B cell (primary cell): ENCODE measurements at regions of chr4 and their contacts with region 1.

Region 1: GRCh38 chr4:1899149-1900086 is 28.2 kb downstream of the NSD2 start:
- DNase-seq: peak; percentile 87
- ATAC-seq: peak; percentile 98
- H3K4me3 ChIP-seq: no peak overlapping the region
- H3K4me3 Mint-ChIP-seq: no peak overlapping the region
- H3K27ac ChIP-seq: no peak overlapping the region
- H3K27ac Mint-ChIP-seq: no peak overlapping the region
- H3K4me1 ChIP-seq: peaks cover 5 to 9% of the 10 kb centered on the region in 2 donors
- H3K4me1 Mint-ChIP-seq: peaks cover 9% of the 10 kb centered on the region
- H3K27me3 ChIP-seq: no peaks in the 10 kb centered on the region
- H3K27me3 Mint-ChIP-seq: no peaks in the 10 kb centered on the region
- CTCF ChIP-seq: peak; percentile 92

Region 2: DNA sequence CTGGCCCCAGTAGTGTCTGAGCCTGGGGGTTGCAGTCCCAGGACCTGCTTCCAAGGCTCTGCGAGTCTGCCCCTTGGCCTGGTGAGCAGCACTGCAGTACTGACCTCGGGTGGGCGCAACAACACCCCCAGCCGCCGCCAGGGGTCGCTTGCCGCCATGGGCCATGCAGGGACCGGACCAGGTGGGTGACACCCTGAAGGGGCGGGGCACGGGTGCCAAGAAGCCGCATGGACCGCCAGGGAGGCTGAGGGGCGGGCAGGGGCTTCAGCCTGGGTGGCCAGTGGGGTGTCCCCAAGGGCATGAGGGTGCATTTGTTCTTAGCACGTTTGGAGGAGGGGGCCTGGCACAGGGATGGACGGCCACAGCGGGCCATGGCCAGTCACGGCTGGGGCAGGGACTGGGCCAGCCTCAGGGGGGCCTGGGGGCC is 153.1 kb before region 1 on chr4:
- CTCF ChIA-PET with region 1: interaction called, 120 read pairs
- POLR2A ChIA-PET with region 1: no interaction called
- intact Hi-C with region 1: loop called (anchors 1 kb)
- DNase-seq: peak; percentile 85
- ATAC-seq: peak; percentile 87
- H3K4me3 ChIP-seq: no peak overlapping the region
- H3K4me3 Mint-ChIP-seq: no peak overlapping the region
- H3K27ac ChIP-seq: no peak overlapping the region
- H3K27ac Mint-ChIP-seq: no peak overlapping the region
- H3K4me1 ChIP-seq: peaks cover 3 to 10% of the 10 kb centered on the region in 2 donors
- H3K4me1 Mint-ChIP-seq: peaks cover 2% of the 10 kb centered on the region
- H3K27me3 ChIP-seq: peaks cover 0 to 7% (median 0%) of the 10 kb centered on the region in 4 experiments
- H3K27me3 Mint-ChIP-seq: no peaks in the 10 kb centered on the region
- CTCF ChIP-seq: peak; percentile 89

Region 3: DNA sequence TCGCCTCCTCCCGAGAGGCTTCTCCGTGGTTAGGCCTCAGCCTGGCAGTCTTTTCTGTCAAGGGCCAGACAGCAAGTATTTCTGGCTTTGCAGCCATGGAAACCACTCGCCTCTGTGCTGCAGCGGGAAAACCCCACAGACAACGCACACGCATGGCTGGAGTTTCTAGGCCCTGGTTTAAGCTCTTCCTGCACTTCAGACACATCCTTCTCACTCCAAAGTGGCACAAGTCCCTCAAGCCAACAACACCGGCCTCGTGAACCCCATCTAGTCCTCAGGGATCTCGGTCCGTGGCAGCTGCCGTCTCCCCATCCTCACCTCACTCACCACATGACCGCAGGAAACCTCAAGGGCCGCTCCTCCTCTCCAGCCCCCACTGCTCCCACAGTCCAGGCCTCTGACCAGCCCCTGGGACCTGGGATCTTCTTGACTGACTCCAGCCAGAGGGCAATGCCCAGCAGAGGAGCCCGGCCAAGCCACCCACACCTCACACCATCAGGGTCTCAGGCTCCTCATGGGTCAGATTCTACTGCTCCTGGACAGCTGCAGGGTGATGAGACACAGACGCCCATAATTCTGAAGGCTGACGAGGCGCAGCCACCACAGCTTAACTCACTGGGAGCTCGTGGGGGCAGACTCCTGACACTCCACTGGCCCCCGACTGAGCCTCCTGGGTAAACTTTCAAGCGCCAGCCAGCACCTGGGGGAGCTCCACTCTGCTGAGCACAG is 65.2 kb before region 1 on chr4:
- CTCF ChIA-PET with region 1: interaction called, 21 read pairs
- POLR2A ChIA-PET with region 1: no interaction called
- intact Hi-C with region 1: no loop called
- DNase-seq: peak; percentile 76
- ATAC-seq: peak; percentile 84
- H3K4me3 ChIP-seq: no peak overlapping the region
- H3K4me3 Mint-ChIP-seq: peak overlapping the region; percentile 61
- H3K27ac ChIP-seq: peak overlapping the region; percentile 41 to 76
- H3K27ac Mint-ChIP-seq: peak overlapping the region; percentile 78
- H3K4me1 ChIP-seq: peaks cover 16 to 26% of the 10 kb centered on the region in 2 donors
- H3K4me1 Mint-ChIP-seq: peaks cover 29% of the 10 kb centered on the region
- H3K27me3 ChIP-seq: no peaks in the 10 kb centered on the region
- H3K27me3 Mint-ChIP-seq: no peaks in the 10 kb centered on the region
- CTCF ChIP-seq: no peak

Region 4: DNA sequence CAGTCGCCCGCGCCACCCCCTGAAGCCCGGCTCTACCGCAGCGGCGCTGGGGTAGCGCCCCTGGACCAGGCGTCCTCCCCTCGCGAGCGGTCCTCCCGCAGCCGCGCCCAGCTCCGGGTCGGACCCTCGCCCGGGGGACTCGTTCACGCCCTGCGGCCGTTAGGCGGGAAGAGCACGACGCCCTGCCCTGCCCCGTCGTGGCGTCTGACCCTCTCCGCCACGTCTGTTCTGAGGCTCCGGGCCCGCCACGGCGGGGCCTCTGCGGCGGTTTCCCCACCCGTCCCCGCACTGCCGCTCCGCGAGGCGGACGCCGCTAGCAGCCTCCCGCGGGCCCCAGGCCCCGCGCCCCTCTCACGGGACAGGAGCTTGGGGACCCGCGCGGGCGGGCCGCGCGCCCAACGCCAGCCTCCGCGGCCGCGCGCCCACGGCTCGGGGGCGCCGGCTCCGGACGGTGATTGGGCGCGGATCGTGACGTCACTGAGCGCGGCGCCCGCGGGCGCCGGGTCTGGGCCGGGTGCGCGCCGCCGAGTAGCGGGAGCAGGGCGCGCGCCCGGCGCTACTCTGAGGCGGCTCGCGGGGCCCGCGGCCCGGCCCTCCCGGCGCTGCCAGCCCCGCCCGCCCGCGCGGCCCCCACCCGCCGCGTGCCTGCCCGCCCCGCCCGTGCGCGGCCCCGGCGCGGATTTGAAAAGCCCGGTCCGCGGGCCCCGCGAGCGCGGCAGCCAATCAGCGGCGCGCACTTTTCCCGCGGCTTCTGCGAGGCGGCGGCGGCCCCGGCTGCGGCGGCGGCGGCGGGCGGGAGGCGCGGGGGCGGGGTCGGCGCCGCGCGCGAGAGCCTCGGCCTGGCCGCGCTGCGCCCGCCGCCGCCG is 28.6 kb before region 1 on chr4 and contains the start of gene NSD2:
- CTCF ChIA-PET with region 1: interaction called, 12 read pairs
- POLR2A ChIA-PET with region 1: no interaction called
- intact Hi-C with region 1: loop called (anchors 1 kb)
- DNase-seq: peak; percentile 95
- ATAC-seq: peak; percentile 66
- H3K4me3 ChIP-seq: peak within 1 kb of the TSS; percentile 13 to 89 (median 79)
- H3K4me3 Mint-ChIP-seq: peak within 1 kb of the TSS; percentile 87
- H3K27ac ChIP-seq: peak within 1 kb of the TSS; percentile 87 to 95
- H3K27ac Mint-ChIP-seq: peak within 1 kb of the TSS; percentile 93
- H3K4me1 ChIP-seq: peaks cover 12 to 26% of the 10 kb centered on the region in 2 donors
- H3K4me1 Mint-ChIP-seq: peaks cover 26% of the 10 kb centered on the region
- H3K27me3 ChIP-seq: peaks cover 0 to 4% (median 2%) of the 10 kb centered on the region in 4 experiments
- H3K27me3 Mint-ChIP-seq: no peaks in the 10 kb centered on the region
- CTCF ChIP-seq: no peak
- total RNA-seq, gene NSD2: 64.8 and 71.9 TPM in 2 replicates

Region 5: DNA sequence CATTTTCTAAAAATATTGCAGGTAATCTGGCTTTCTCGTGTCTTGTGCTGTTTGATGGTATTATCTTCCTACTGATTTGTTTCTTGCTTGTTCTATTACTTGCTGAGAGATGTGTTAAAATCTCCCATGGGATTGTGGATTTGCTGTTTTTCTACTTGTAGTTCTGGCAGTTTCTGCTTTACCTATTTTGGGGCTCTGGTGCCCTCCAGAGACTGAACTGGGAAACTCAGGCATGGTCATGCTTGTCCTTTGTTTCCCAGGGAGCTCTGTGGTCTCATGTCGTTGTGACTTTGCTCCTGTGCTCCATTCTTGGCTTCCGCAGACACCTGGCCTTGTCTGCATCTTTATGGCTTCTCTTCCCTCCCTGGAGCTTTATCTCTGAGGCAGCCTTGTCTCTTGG is 11.2 kb after region 1 on chr4:
- CTCF ChIA-PET with region 1: interaction called, 36 read pairs
- POLR2A ChIA-PET with region 1: no interaction called
- intact Hi-C with region 1: no loop called
- DNase-seq: peak; percentile 22
- ATAC-seq: no peak
- H3K4me3 ChIP-seq: no peak overlapping the region
- H3K4me3 Mint-ChIP-seq: no peak overlapping the region
- H3K27ac ChIP-seq: no peak overlapping the region
- H3K27ac Mint-ChIP-seq: no peak overlapping the region
- H3K4me1 ChIP-seq: no peaks in the 10 kb centered on the region
- H3K4me1 Mint-ChIP-seq: peaks cover 2% of the 10 kb centered on the region
- H3K27me3 ChIP-seq: no peaks in the 10 kb centered on the region
- H3K27me3 Mint-ChIP-seq: no peaks in the 10 kb centered on the region
- CTCF ChIP-seq: peak; percentile 15

Region 6: GRCh38 chr4:2948895-2949765 is 1049.7 kb after region 1 on chr4:
- CTCF ChIA-PET with region 1: no interaction called
- POLR2A ChIA-PET with region 1: no interaction called
- intact Hi-C with region 1: no loop called
- DNase-seq: no peak
- ATAC-seq: peak; percentile 41
- H3K4me3 ChIP-seq: no peak overlapping the region
- H3K4me3 Mint-ChIP-seq: no peak overlapping the region
- H3K27ac ChIP-seq: no peak overlapping the region
- H3K27ac Mint-ChIP-seq: no peak overlapping the region
- H3K4me1 ChIP-seq: no peaks in the 10 kb centered on the region
- H3K4me1 Mint-ChIP-seq: no peaks in the 10 kb centered on the region
- H3K27me3 ChIP-seq: no peaks in the 10 kb centered on the region
- H3K27me3 Mint-ChIP-seq: no peaks in the 10 kb centered on the region
- CTCF ChIP-seq: peak; percentile 20